Right ventricle myocardium inferior (tissue), 1 donor: ENCODE measurements at regions of chr2 and their contacts with region 1.

Region 1: GRCh38 chr2:167196461-167197252 is 308.4 kb downstream of the XIRP2 start:
- DNase-seq: no peak
- ATAC-seq: peak; percentile 84

Region 2: GRCh38 chr2:166643980-166644379 is 552.7 kb before region 1 on chr2:
- intact Hi-C with region 1: loop called (anchors 10 kb)
- DNase-seq: no peak
- ATAC-seq: no peak